Activated CD8-positive, alpha-beta memory T cell treated with anti-CD3 and anti-CD28 coated beads, Interleukin-2, amount 10 ng/mL, durations not matched to agents 7 days and 5 days (primary cell): ENCODE measurements at regions of chr9 and their contacts with region 1.

Region 1: GRCh38 chr9:137578518-137579258 is at the start of gene DPH7:
- DNase-seq: peak; percentile 96
- ATAC-seq: peak; percentile 98
- H3K4me3 Mint-ChIP-seq: peak within 1 kb of the TSS; percentile 80
- H3K27ac Mint-ChIP-seq: peak within 1 kb of the TSS; percentile 74
- H3K4me1 Mint-ChIP-seq: peaks cover 35% of the 10 kb centered on the region
- H3K27me3 Mint-ChIP-seq: no peaks in the 10 kb centered on the region
- total RNA-seq, gene DPH7: 39.9 to 45.1 TPM

Region 2: DNA sequence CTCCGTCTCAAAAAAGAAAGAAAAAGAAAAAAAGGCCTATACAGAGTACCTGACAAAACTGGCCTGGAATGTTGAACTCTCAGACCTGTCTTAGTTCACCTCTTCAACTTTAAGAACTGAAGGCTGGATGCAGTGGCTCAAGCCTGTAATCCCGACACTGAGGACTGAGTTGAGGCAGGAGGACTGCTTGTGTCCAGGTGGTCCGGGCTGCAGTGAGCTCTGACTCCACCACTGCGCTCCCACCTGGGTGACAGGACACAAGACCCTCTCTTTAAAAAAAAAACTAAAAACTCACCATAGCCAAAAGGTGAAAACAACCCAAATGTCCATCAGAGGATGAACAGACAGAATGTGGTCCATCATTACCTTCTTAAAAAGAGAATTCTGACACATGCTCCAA is 20.6 kb before region 1 on chr9:
- CTCF ChIA-PET with region 1: interaction called, 11 read pairs
- DNase-seq: no peak
- ATAC-seq: no peak
- H3K4me3 Mint-ChIP-seq: no peak overlapping the region
- H3K27ac Mint-ChIP-seq: no peak overlapping the region
- H3K4me1 Mint-ChIP-seq: peaks cover 2% of the 10 kb centered on the region
- H3K27me3 Mint-ChIP-seq: no peaks in the 10 kb centered on the region

Region 3: GRCh38 chr9:137590462-137591383 is 12.0 kb after region 1 on chr9 and contains the start of gene ZMYND19:
- CTCF ChIA-PET with region 1: interaction called, 19 read pairs
- DNase-seq: peak; percentile 89
- ATAC-seq: peak; percentile 96
- H3K4me3 Mint-ChIP-seq: peak within 1 kb of the TSS; percentile 81
- H3K27ac Mint-ChIP-seq: peak within 1 kb of the TSS; percentile 88
- H3K4me1 Mint-ChIP-seq: peaks cover 19% of the 10 kb centered on the region
- H3K27me3 Mint-ChIP-seq: no peaks in the 10 kb centered on the region
- total RNA-seq, gene ZMYND19: 34.0 to 46.0 TPM

Region 4: DNA sequence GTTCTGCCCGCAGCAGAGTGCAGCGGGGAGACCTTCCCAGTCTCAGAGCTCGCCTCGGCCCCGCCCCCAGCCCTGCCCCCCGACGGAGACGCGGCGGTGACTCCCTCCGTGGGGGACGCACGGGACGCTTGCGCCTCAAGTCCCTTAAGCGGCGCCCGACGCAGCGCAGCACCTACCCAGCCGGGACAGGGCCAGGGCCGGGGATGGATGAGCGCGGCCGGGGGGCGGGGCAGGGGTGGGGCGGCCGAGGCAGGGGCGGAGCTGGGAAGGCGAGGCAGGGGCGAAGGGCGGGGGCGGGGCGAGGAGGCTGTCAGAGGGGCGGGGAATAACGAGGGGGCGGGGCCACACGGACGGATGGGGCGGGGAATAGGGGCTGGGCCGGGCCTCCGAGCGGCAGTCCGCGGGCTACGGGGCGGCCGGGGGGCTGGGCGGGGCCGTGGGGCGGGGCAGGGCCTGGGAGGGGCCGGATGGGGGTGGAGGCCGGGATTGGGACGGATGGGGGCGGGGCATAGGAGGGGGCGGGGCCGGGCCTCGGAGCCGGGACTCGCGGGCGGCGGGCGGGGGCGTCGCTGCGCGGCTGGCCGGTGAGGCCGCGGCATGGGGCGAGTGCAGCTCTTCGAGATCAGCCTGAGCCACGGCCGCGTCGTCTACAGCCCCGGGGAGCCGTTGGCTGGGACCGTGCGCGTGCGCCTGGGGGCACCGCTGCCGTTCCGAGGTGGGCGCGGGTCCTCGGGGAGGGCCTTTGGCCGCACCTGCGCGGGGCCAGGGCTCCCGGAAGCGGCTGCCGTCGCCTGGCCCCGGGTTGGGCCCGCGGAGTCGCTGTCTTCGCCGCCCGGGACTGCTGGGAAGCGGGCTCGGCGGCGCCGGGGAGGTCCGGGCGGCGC is 26.7 kb after region 1 on chr9 and contains the start of gene ARRDC1:
- CTCF ChIA-PET with region 1: no interaction called
- DNase-seq: peak; percentile 96
- ATAC-seq: peak; percentile 94
- H3K4me3 Mint-ChIP-seq: peak within 1 kb of the TSS; percentile 73
- H3K27ac Mint-ChIP-seq: no peak within 1 kb of the TSS
- H3K4me1 Mint-ChIP-seq: peaks cover 20% of the 10 kb centered on the region
- H3K27me3 Mint-ChIP-seq: no peaks in the 10 kb centered on the region
- total RNA-seq, gene ARRDC1: 49.0 to 50.1 TPM

Region 5: GRCh38 chr9:137647096-137647714 is 68.5 kb after region 1 on chr9:
- CTCF ChIA-PET with region 1: no interaction called
- DNase-seq: no peak
- ATAC-seq: no peak
- H3K4me3 Mint-ChIP-seq: no peak overlapping the region
- H3K27ac Mint-ChIP-seq: no peak overlapping the region
- H3K4me1 Mint-ChIP-seq: peaks cover 37% of the 10 kb centered on the region
- H3K27me3 Mint-ChIP-seq: no peaks in the 10 kb centered on the region